Sigmoid colon (tissue), 7 donors: ENCODE measurements at regions of chr6 and their contacts with region 1.

Region 1: GRCh38 chr6:24385536-24386269 is 17.0 kb upstream of the MRS2 start:
- DNase-seq: no peak
- H3K4me3 ChIP-seq: no peak overlapping the region
- H3K27ac ChIP-seq: no peak overlapping the region
- H3K4me1 ChIP-seq: no peaks in the 10 kb centered on the region
- H3K27me3 ChIP-seq: no peaks in the 10 kb centered on the region
- CTCF ChIP-seq: no peak
- EP300 ChIP-seq: no peak
- POLR2A ChIP-seq: no peak

Region 2: GRCh38 chr6:24283043-24283985 is 102.4 kb before region 1 on chr6:
- intact Hi-C with region 1: loop called (anchors 10 kb)
- DNase-seq: peak; percentile 81
- H3K4me3 ChIP-seq: peak overlapping the region in 1 of 4 donors; percentile 1
- H3K27ac ChIP-seq: no peak overlapping the region
- H3K4me1 ChIP-seq: peaks cover 0 to 13% (median 6%) of the 10 kb centered on the region in 4 donors
- H3K27me3 ChIP-seq: no peaks in the 10 kb centered on the region
- CTCF ChIP-seq: peak in 3 of 4 experiments; percentile 25 to 57 (median 37)
- EP300 ChIP-seq: no peak
- POLR2A ChIP-seq: no peak

Region 3: GRCh38 chr6:24472177-24472576 is 86.5 kb after region 1 on chr6:
- intact Hi-C with region 1: no loop called
- DNase-seq: no peak
- H3K4me3 ChIP-seq: no peak overlapping the region
- H3K27ac ChIP-seq: no peak overlapping the region
- H3K4me1 ChIP-seq: no peaks in the 10 kb centered on the region
- H3K27me3 ChIP-seq: no peaks in the 10 kb centered on the region
- CTCF ChIP-seq: no peak
- EP300 ChIP-seq: no peak
- POLR2A ChIP-seq: no peak